Adrenal gland (tissue), 19 donors: ENCODE measurements at regions of chr3 and their contacts with region 1.

Region 1: DNA sequence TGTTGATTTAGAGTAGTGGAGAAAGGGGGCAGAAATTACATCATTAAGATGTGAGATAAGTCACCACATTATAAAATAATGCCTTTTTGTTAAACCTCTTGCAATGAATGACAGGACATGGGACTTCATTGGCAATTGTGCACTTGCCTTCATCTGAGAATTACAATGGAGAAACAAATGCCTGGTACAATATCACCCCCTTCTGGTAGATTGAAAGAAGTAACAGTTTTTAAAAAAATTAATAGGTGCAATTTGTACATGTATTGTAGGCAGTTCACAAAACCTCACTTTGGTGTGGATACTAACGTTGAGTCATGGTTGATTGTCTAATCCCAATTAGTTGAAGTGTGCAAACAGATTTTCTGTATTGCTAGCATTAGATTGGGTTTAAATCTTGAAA is 4.6 kb upstream of the P2RY14 start:
- DNase-seq: no peak
- H3K4me3 ChIP-seq: no peak overlapping the region
- H3K27ac ChIP-seq: no peak overlapping the region
- H3K4me1 ChIP-seq: peaks cover 0 to 17% of the 10 kb centered on the region in 2 donors
- H3K27me3 ChIP-seq: no peaks in the 10 kb centered on the region
- CTCF ChIP-seq: peak; percentile 54 to 88 (median 78)
- POLR2A ChIP-seq: no peak

Region 2: DNA sequence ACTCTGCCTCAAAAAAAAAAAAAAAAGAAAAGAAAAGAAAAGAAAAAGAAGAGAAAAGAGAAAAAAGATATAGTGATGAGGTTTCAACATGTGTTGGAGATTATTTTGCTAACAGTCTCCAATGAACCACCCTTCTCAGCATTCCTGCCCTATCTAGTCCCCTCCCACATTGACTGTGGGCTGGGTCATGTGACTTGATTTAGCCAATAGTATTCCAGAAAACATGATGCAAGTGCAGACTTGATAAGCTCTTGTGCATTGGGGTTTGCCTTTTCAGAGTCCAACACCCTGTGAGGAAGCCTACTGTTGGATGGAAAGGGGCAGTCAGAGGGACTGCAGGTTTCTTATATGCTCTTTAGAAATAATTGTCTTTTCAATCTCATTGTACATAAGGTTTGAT is 235.3 kb before region 1 on chr3:
- intact Hi-C with region 1: no loop called
- DNase-seq: no peak
- H3K4me3 ChIP-seq: no peak overlapping the region
- H3K27ac ChIP-seq: no peak overlapping the region
- H3K4me1 ChIP-seq: no peaks in the 10 kb centered on the region
- H3K27me3 ChIP-seq: no peaks in the 10 kb centered on the region
- CTCF ChIP-seq: no peak
- POLR2A ChIP-seq: no peak

Region 3: GRCh38 chr3:151168269-151169094 is 114.4 kb before region 1 on chr3:
- intact Hi-C with region 1: loop called (anchors 5 kb)
- DNase-seq: peak; percentile 78 to 93 (median 87)
- H3K4me3 ChIP-seq: no peak overlapping the region
- H3K27ac ChIP-seq: peak overlapping the region in 2 of 5 donors; percentile 34 to 46
- H3K4me1 ChIP-seq: no peaks in the 10 kb centered on the region
- H3K27me3 ChIP-seq: no peaks in the 10 kb centered on the region
- CTCF ChIP-seq: peak; percentile 50 to 87 (median 76)
- POLR2A ChIP-seq: no peak

Region 4: DNA sequence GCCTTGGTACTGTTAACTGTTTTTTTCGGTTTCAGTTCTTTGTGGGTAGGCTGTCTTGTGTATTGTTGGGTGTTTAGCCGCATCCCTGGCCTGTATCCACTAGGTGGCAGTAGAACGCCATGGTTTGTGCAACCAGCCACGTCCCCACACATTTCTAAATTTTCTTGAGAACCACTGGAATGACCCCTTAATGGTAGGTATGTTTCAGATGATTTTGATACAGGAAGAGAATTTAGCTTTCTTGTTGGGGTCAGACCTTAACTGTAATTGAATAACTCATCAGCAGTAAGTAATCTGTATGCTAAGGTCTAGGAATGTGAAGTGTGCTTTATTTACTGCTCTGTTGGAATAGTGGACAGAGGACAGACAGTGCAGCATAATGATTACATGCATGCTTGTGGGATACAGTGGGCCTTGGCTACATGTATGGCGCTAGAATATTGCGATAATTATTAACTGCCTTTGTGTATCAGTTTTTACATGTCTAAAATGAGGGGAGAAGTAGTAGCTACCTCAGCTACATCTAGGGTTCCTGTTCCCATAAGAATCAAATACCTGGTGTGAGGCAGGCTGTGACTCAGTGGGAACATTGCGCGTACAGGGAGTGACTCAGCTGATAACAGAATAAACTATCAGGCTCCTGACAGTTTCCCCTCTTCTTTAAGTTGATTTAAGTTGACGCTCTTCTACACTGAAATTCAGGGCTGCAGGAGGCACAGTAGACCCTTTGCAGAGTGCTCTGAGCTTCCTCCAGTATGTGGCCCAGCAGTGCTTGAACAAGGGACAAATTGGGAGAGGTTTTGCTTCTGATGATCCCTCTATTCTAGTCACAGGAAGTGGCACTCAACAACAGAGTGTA is 54.9 kb before region 1 on chr3:
- intact Hi-C with region 1: loop called in 1 of 2 experiments (anchors 5 kb)
- DNase-seq: peak; percentile 70 to 92 (median 80)
- H3K4me3 ChIP-seq: no peak overlapping the region
- H3K27ac ChIP-seq: no peak overlapping the region
- H3K4me1 ChIP-seq: peaks cover 0 to 17% of the 10 kb centered on the region in 2 donors
- H3K27me3 ChIP-seq: no peaks in the 10 kb centered on the region
- CTCF ChIP-seq: peak; percentile 87 to 96 (median 91)
- POLR2A ChIP-seq: no peak